PC-3 (cell line): ENCODE measurements at regions of chr1 and their contacts with region 1.

Region 1: GRCh38 chr1:63773815-63774616 is at the start of gene ROR1:
- DNase-seq: peak; percentile 87
- ATAC-seq: peak; percentile 88
- H3K4me3 ChIP-seq: peak within 1 kb of the TSS; percentile 93
- H3K27ac ChIP-seq: peak within 1 kb of the TSS; percentile 85
- H3K4me1 ChIP-seq: peaks cover 34% of the 10 kb centered on the region
- H3K27me3 ChIP-seq: no peaks in the 10 kb centered on the region
- CTCF ChIP-seq: peak; percentile 72
- total RNA-seq, gene ROR1: 16.5 and 22.6 TPM in 2 replicates

Region 2: DNA sequence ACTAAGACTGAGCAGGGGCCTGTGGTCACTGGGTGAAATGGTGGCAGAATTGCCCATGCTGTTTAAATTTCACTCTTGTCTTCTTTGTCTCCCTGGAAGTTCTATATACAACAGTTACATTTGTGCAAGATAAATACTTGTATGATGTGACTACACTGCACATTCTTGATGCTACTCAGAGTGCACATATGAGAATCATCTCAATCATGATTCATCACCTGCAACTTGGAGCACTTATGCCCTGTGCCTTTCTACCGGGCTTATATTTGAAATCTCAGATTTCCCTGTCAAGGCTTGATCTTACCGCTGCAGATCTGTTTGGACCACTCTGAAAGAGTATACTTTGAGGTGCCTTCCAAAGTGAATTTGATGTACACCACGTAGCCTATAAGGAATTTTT is 170.2 kb before region 1 on chr1:
- CTCF ChIA-PET with region 1: no interaction called
- POLR2A ChIA-PET with region 1: no interaction called
- intact Hi-C with region 1: no loop called
- DNase-seq: no peak
- ATAC-seq: no peak
- H3K4me3 ChIP-seq: no peak overlapping the region
- H3K27ac ChIP-seq: no peak overlapping the region
- H3K4me1 ChIP-seq: peaks cover 18% of the 10 kb centered on the region
- H3K27me3 ChIP-seq: no peaks in the 10 kb centered on the region
- CTCF ChIP-seq: no peak

Region 3: DNA sequence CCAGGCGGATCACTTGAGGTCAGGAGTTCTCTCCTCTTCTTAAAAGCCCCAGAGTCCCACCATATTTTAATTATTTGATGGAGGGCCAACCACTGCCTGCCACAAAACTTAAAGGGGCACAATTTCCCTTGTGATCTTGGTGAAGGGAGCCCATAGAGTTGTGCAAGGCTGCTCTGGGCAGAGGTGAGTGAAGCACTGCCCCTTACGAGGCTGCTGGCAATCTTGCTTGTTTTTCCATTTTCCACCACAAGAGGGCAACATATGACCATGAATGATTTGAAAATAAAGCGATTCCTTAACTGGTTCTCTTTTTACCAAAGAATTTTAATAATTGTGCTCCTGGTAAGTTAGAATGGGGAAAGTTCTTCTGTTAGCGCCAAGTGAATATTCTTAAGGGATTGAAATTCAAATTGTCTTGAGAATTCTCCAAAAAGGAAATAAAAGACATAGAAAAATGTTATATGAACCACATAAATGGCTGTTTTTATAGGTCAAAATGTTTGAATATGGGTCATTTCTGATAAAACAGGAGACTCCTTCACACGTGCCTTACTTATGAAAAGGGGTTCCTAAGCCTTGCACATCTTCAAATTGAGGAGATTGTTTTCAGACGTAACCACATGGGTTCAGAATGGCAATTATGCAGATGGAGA is 158.1 kb before region 1 on chr1:
- CTCF ChIA-PET with region 1: no interaction called
- POLR2A ChIA-PET with region 1: no interaction called
- intact Hi-C with region 1: loop called (anchors 5 kb)
- DNase-seq: peak; percentile 94
- ATAC-seq: peak; percentile 76
- H3K4me3 ChIP-seq: no peak overlapping the region
- H3K27ac ChIP-seq: no peak overlapping the region
- H3K4me1 ChIP-seq: peaks cover 7% of the 10 kb centered on the region; the same call in 1 of the 2 replicates
- H3K27me3 ChIP-seq: no peaks in the 10 kb centered on the region
- CTCF ChIP-seq: peak; percentile 88

Region 4: GRCh38 chr1:63731117-63732043 is 42.6 kb before region 1 on chr1:
- CTCF ChIA-PET with region 1: no interaction called
- POLR2A ChIA-PET with region 1: no interaction called
- intact Hi-C with region 1: loop called (anchors 1 kb)
- DNase-seq: peak; percentile 99
- ATAC-seq: peak; percentile 87
- H3K4me3 ChIP-seq: peak overlapping the region; percentile 15; the same call in 1 of the 2 replicates
- H3K27ac ChIP-seq: peak overlapping the region; percentile 96
- H3K4me1 ChIP-seq: peaks cover 36% of the 10 kb centered on the region
- H3K27me3 ChIP-seq: no peaks in the 10 kb centered on the region
- CTCF ChIP-seq: no peak

Region 5: GRCh38 chr1:63821091-63822005 is 47.3 kb after region 1 on chr1:
- CTCF ChIA-PET with region 1: no interaction called
- POLR2A ChIA-PET with region 1: no interaction called
- intact Hi-C with region 1: loop called (anchors 5 kb)
- DNase-seq: peak; percentile 64
- ATAC-seq: peak; percentile 54
- H3K4me3 ChIP-seq: no peak overlapping the region
- H3K27ac ChIP-seq: no peak overlapping the region
- H3K4me1 ChIP-seq: peaks cover 37% of the 10 kb centered on the region
- H3K27me3 ChIP-seq: no peaks in the 10 kb centered on the region
- CTCF ChIP-seq: no peak

Region 6: GRCh38 chr1:64042331-64043100 is 268.5 kb after region 1 on chr1:
- CTCF ChIA-PET with region 1: no interaction called
- POLR2A ChIA-PET with region 1: no interaction called
- intact Hi-C with region 1: loop called (anchors 10 kb)
- DNase-seq: peak; percentile 96
- ATAC-seq: peak; percentile 55
- H3K4me3 ChIP-seq: peak overlapping the region; percentile 42; the same call in 1 of the 2 replicates
- H3K27ac ChIP-seq: peak overlapping the region; percentile 81
- H3K4me1 ChIP-seq: peaks cover 63% of the 10 kb centered on the region
- H3K27me3 ChIP-seq: no peaks in the 10 kb centered on the region
- CTCF ChIP-seq: peak; percentile 16; the same call in 1 of the 2 replicates